ENCODE measurements at regions of chr5 and their contacts with region 1.

Region 1: DNA sequence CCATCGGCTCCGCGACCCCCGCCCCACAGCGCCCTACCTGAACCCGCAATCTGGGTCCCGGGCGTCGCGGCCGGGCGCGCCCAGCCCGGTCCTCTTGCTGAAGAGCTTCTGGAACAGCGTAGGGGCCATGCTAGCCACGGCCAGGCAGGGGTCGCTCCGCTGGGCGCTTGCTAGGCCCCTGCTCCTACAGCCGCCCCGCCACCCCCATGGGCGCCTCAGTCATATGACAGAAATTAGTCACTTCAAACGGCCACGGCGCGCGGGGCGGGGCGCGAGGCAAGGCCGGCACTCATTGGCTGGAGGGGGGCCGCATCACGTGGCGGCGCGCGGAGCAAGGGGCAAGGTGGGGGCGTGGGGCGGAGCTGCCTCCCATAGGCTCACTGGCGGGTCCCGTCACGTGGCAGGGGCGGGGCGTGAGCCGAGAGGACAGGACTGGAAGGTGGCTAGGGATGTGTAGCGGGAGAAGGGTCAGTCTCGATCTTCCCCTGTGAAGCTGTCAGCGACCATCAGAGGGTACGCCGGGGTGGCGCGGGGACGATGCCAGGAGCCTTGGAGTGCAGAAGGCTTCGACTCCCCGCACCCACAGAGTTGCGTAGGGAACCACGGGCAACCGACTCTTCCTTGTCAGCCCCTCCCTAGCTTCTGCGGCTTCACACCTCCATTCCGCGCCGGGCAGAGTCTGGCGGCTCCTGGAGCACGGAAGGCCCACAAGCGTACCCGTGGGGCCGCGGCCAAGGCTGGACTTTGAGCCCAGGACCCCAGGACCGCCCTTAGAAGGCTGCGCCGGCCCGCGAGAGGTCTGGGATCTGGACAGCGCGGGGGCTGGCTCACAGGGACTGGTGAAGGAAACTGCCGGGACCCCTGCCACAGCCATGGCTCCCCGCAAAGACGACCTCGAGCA is at the start of gene FNIP1:
- DNase-seq: peak; percentile 100
- ATAC-seq: peak; percentile 94 to 98 (median 94)
- H3K4me3 ChIP-seq: peak within 1 kb of the TSS; percentile 88 to 92 (median 92)
- H3K27ac ChIP-seq: peak within 1 kb of the TSS; percentile 99 to 100 (median 100)
- H3K4me1 ChIP-seq: peaks cover 0 to 11% (median 0%) of the 10 kb centered on the region in 4 donors
- H3K27me3 ChIP-seq: no peaks in the 10 kb centered on the region
- CTCF ChIP-seq: peak in 1 of 4 donors; percentile 6
- POLR2A ChIP-seq: peak; percentile 94
- total RNA-seq, gene FNIP1: 14.2 to 25.2 (median 20.9) TPM

Region 2: DNA sequence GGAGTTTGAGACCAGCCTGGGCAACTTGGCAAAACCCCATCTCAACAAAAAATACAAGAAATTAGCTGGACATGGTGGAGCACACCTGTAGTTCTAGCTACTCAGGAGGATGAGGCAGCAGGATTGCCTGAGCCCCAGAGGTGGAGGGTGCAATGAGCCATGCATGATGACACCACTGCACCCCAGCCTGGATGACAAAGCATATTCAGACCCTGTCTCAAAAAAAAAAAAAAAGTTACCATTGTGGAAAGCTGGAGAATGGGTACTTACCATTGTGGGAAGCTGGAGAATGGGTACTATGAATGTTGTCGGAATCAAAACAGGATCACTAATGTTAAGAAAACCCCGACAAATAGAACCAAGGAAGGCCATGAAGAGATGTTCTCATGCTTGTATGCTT is 657.7 kb before region 1 on chr5:
- intact Hi-C with region 1: no loop called
- DNase-seq: no peak
- ATAC-seq: no peak
- H3K4me3 ChIP-seq: no peak overlapping the region
- H3K27ac ChIP-seq: no peak overlapping the region
- H3K4me1 ChIP-seq: no peaks in the 10 kb centered on the region
- H3K27me3 ChIP-seq: no peaks in the 10 kb centered on the region
- CTCF ChIP-seq: no peak
- POLR2A ChIP-seq: no peak

Region 3: GRCh38 chr5:131640043-131640856 is 156.8 kb before region 1 on chr5:
- intact Hi-C with region 1: loop called in 1 of 2 experiments (anchors 10 kb)
- DNase-seq: no peak
- ATAC-seq: no peak
- H3K4me3 ChIP-seq: no peak overlapping the region
- H3K27ac ChIP-seq: no peak overlapping the region
- H3K4me1 ChIP-seq: peaks cover 0 to 3% (median 0%) of the 10 kb centered on the region in 4 donors
- H3K27me3 ChIP-seq: no peaks in the 10 kb centered on the region
- CTCF ChIP-seq: no peak
- POLR2A ChIP-seq: no peak

Region 4: DNA sequence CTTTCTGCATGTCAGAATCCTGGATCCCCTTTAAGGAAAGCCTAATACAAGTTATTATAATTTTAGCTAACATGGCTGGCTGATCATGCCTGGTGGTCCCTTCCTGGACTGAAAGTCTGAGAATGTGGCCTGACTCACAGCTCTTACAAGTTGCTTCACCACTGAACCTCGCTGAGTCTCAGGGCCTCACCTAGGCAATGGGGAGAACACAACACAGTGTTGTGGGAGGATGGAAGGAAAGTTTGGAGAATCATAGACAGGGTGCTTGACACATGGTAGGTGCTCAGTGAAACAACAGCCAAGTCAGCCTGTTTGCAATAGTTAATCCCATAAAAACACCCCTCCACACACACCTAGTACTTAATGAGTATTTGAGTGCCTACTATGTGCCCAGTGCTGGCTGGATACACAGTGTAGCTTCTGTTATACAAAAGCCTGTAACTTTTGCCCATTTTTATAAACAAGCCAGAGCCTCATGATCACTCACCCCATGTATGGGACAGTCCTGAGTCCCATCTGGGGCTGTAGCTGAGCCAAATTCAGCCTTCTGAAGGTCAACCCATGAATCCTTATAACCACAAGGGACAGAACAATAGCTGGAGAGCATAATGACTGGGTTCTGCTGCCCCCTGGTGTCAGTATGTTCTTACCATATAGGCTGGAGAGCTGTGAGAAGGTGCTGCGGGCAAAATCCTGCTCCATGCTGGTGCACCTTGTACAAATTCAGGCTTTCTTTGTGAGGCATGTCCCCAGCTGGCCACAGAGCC is 210.5 kb after region 1 on chr5:
- intact Hi-C with region 1: loop called in 1 of 2 experiments (anchors 10 kb)
- DNase-seq: peak in 2 of 3 donors; percentile 70 to 78
- ATAC-seq: peak; percentile 81 to 87 (median 83)
- H3K4me3 ChIP-seq: no peak overlapping the region
- H3K27ac ChIP-seq: no peak overlapping the region
- H3K4me1 ChIP-seq: peaks cover 0 to 4% (median 0%) of the 10 kb centered on the region in 4 donors
- H3K27me3 ChIP-seq: no peaks in the 10 kb centered on the region
- CTCF ChIP-seq: peak; percentile 70 to 86 (median 78)
- POLR2A ChIP-seq: no peak

Measured in right lobe of liver (tissue), 6 donors.